ENCODE measurements at regions of chr1 and their contacts with region 1.

Region 1: DNA sequence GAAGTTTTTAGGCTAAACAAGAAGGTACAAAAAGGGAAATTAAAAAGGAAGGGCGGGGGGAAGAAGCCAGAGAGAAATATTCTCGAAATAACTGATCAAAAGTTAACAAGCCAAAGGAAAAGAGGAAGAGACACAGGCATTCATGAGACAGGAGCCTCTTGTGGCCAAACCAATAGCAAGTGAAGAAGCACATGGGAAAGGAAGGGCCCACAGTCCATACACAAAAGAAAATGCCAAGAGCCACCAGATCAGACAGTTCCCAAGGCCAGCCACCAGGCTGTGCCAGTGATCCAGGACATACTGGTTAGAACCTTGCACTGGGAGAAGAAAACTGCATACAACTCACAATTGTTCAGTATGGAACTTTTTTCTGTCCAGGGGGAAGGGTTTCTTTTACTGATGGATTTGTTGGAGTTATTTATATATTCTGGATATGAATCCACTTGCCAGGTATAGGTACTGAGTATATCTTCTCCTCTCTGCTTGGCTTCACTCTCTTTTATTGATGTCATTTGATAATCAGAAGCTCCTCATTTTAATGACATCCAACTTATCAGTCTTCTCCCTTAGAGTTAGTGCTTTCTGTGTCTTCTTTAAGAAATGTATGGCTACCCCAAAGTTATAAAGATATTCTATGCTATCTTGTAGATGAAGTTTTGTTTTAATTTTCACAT is 76.8 kb downstream of the CD46 start:
- DNase-seq: peak; percentile 82
- H3K4me3 ChIP-seq: no peak overlapping the region
- H3K27ac ChIP-seq: peak overlapping the region; percentile 99
- H3K4me1 ChIP-seq: peaks cover 37% of the 10 kb centered on the region
- H3K27me3 ChIP-seq: no peaks in the 10 kb centered on the region
- CTCF ChIP-seq: peak; percentile 77 to 96 (median 94)
- POLR2A ChIP-seq: no peak

Region 2: GRCh38 chr1:207787776-207788175 is 40.8 kb before region 1 on chr1:
- intact Hi-C with region 1: no loop called
- DNase-seq: no peak
- H3K4me3 ChIP-seq: no peak overlapping the region
- H3K27ac ChIP-seq: peak overlapping the region in 1 of 2 donors; percentile 82
- H3K4me1 ChIP-seq: peaks cover 7% of the 10 kb centered on the region
- H3K27me3 ChIP-seq: no peaks in the 10 kb centered on the region
- CTCF ChIP-seq: no peak
- POLR2A ChIP-seq: no peak

Region 3: DNA sequence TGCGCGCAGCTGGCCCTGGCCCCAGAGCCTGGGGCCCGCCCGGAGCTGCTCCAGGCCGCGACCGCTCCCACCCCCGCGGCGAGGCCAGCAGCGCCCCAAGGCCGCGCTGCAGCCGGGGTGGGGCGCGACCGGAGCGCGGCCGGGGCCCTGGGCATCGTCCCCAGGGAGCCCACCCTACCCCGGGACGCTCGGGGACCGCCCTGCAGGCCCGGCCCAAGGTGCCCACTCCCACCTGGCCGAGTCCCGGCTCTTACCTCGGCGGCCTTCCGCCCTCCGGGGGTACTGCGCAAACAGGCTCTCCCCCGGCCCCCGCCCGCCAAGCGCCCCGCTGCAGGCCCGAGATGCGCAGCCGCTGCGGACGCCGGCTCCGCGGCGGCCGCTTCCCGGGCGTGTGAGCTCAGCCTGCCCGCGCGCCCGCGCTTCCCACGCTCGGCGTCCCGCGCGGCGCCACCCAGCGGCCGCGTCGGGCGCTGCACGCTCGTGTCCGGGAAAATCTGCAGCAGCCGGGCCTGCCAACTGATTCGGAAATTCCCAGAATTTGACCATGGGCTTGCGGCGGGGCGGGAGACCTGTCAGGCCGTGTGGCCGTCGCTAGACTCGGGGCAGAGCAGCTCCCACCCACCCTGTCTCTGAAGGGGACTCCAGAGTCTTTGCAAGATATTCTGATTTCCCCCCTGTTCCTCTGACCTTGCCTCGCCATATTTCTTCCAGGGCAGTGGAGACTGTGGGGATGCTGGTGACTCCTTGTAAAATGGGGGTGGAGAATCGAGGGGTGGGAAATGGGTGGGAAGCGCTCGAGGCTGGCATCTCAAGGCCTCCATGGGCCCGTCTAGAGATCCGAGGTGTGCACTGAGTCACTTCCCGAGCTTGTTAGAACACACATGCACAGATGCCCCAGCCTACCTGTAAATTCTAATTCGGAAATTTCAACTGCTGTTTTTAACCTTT is 40.4 kb after region 1 on chr1:
- intact Hi-C with region 1: loop called (anchors 1 kb)
- DNase-seq: peak; percentile 75
- H3K4me3 ChIP-seq: peak overlapping the region; percentile 79 to 90
- H3K27ac ChIP-seq: peak overlapping the region; percentile 99
- H3K4me1 ChIP-seq: peaks cover 14% of the 10 kb centered on the region
- H3K27me3 ChIP-seq: no peaks in the 10 kb centered on the region
- CTCF ChIP-seq: peak; percentile 80 to 99 (median 97)
- POLR2A ChIP-seq: peak; percentile 72

Region 4: DNA sequence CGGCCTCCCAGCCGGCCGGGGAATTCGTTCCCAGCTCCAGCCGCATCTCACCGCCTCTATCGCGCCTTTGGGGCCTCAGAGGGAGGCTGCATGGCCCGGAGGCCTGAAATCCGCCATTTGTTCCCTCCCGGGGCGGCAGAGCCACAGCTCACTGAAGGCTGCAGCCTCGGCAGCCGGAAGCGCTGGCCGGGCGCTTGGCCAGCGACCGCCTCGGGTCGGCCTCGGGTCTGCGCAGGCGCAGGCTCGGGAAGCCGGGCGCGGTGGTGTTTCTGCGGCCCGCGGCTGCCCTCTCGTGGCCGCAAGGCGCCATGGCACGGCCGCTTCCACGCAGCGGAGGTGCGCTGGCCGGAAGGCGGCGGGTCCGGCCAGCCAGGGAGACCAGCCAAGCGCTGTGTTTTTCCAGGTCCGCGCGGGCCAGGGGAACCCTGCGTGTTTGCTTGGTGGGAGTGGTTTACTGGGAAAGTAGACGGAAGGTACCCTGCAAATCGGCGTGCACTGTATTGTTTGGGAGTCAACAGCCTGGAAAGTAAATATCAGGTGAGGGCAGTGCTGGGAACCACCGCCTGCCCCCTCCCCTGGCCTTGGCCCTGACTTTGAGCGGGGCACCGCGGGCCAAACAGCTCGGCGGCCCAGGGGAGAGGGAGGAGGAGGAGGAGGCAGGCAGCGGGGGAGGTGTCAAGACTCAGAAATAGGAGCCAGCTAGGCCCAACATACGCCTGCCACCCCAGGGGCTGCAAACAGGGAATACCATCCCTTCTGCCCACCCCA is 135.0 kb after region 1 on chr1:
- intact Hi-C with region 1: loop called (anchors 5 kb)
- DNase-seq: peak; percentile 96
- H3K4me3 ChIP-seq: peak overlapping the region; percentile 41 to 44
- H3K27ac ChIP-seq: peak overlapping the region; percentile 91 to 94
- H3K4me1 ChIP-seq: peaks cover 13% of the 10 kb centered on the region
- H3K27me3 ChIP-seq: no peaks in the 10 kb centered on the region
- CTCF ChIP-seq: peak; percentile 100
- POLR2A ChIP-seq: peak; percentile 89

Region 5: GRCh38 chr1:208245185-208245705 is 416.6 kb after region 1 on chr1:
- intact Hi-C with region 1: loop called (anchors 5 kb)
- DNase-seq: peak; percentile 90
- H3K4me3 ChIP-seq: peak overlapping the region; percentile 63 to 80
- H3K27ac ChIP-seq: peak overlapping the region; percentile 81 to 89
- H3K4me1 ChIP-seq: peaks cover 6% of the 10 kb centered on the region
- H3K27me3 ChIP-seq: no peaks in the 10 kb centered on the region
- CTCF ChIP-seq: peak; percentile 45 to 89 (median 88)
- POLR2A ChIP-seq: no peak